Esophagus squamous epithelium (tissue), 5 donors: ENCODE measurements at regions of chr5 and their contacts with region 1.

Region 1: GRCh38 chr5:137218471-137218870 is 280.7 kb downstream of the SPOCK1 start:
- DNase-seq: no peak
- H3K4me3 ChIP-seq: no peak overlapping the region
- H3K27ac ChIP-seq: no peak overlapping the region
- H3K4me1 ChIP-seq: peaks cover 5 to 17% (median 11%) of the 10 kb centered on the region in 3 donors
- H3K27me3 ChIP-seq: no peaks in the 10 kb centered on the region
- CTCF ChIP-seq: no peak
- POLR2A ChIP-seq: no peak

Region 2: GRCh38 chr5:136802383-136802782 is 416.1 kb before region 1 on chr5:
- intact Hi-C with region 1: loop called (anchors 10 kb)
- DNase-seq: no peak
- H3K4me3 ChIP-seq: no peak overlapping the region
- H3K27ac ChIP-seq: no peak overlapping the region
- H3K4me1 ChIP-seq: peaks cover 0 to 11% (median 0%) of the 10 kb centered on the region in 3 donors
- H3K27me3 ChIP-seq: no peaks in the 10 kb centered on the region
- CTCF ChIP-seq: peak in 2 of 6 experiments; percentile 5 to 41
- POLR2A ChIP-seq: no peak

Region 3: GRCh38 chr5:137300411-137301240 is 82.2 kb after region 1 on chr5:
- intact Hi-C with region 1: no loop called
- DNase-seq: no peak
- H3K4me3 ChIP-seq: no peak overlapping the region
- H3K27ac ChIP-seq: no peak overlapping the region
- H3K4me1 ChIP-seq: no peaks in the 10 kb centered on the region
- H3K27me3 ChIP-seq: peaks cover 0 to 6% (median 0%) of the 10 kb centered on the region in 4 donors
- CTCF ChIP-seq: no peak
- POLR2A ChIP-seq: no peak

Region 4: DNA sequence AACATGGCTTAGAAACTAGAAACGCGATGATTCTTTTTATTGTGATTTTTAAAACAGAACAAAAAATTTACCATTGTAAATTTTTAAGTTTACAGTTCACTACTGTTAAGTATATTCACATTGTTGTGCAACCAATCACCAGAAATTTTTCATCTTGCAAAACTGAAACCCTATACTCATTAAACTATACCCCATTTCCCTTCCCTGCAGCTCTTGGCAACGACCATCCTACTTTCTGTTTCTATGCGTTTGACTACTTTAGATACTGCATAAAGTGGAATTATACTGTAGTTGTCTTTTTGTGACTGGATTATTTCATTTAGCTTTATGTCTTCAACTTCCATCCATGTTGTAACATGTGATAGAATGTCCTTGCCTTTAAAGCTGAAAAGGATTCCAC is 228.1 kb after region 1 on chr5:
- intact Hi-C with region 1: no loop called
- DNase-seq: no peak
- H3K4me3 ChIP-seq: no peak overlapping the region
- H3K27ac ChIP-seq: no peak overlapping the region
- H3K4me1 ChIP-seq: no peaks in the 10 kb centered on the region
- H3K27me3 ChIP-seq: peaks cover 0 to 4% (median 0%) of the 10 kb centered on the region in 4 donors
- CTCF ChIP-seq: no peak
- POLR2A ChIP-seq: no peak